OCI-LY7 (cell line): ENCODE measurements at regions of chr12 and their contacts with region 1.

Region 1: GRCh38 chr12:52087961-52088820 is 8.7 kb downstream of the SMIM41 start:
- DNase-seq: peak; percentile 94
- H3K4me3 ChIP-seq: peak overlapping the region; percentile 31
- H3K27ac ChIP-seq: peak overlapping the region; percentile 71
- H3K4me1 ChIP-seq: peaks cover 64% of the 10 kb centered on the region
- CTCF ChIP-seq: no peak

Region 2: GRCh38 chr12:51951199-51951842 is 136.9 kb before region 1 on chr12 and contains the start of gene ACVR1B:
- CTCF ChIA-PET with region 1: no interaction called
- POLR2A ChIA-PET with region 1: no interaction called
- intact Hi-C with region 1: no loop called
- DNase-seq: peak; percentile 92
- H3K4me3 ChIP-seq: peak within 1 kb of the TSS; percentile 98
- H3K27ac ChIP-seq: no peak within 1 kb of the TSS
- H3K4me1 ChIP-seq: peaks cover 18% of the 10 kb centered on the region
- CTCF ChIP-seq: no peak
- total RNA-seq, gene ACVR1B: 3.0 and 4.1 TPM in 2 replicates

Region 3: DNA sequence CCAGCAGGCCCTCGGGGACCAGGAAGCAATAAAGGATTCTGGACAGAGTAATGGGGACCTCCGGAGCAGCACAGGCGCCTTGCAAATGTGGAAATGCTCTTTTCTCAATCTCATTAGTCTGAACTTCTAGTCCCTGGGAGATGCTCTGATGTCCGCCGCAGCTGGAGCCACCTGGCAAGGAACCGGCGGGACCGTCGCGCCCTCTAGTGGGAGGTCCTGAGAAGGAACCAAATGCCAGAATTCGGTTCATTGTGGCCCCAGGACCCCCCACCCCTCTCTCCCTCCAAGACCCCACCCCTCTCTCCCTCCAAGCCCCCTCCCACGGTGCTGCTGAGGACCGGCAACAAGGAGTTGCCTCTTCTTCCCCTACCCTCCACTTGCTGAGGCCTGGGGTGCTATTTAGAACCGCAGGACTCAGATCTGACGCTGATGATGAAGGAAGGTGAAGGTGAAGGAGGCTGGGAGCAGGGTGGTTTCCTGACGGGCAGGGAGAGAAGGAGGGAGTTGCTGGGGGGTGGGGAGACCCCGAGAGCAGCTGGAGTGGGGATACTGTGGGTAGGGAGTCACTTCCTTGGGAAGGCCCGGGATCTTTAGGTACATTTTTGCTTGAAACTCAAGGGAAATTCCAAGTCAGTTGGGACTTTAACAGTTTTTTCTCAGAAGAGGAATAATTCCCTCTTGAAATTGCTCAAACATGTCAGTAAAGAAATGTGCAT is 33.8 kb after region 1 on chr12:
- CTCF ChIA-PET with region 1: interaction called, 6 read pairs
- POLR2A ChIA-PET with region 1: interaction called, 13 read pairs
- intact Hi-C with region 1: loop called (anchors 1 kb)
- DNase-seq: peak; percentile 86
- H3K4me3 ChIP-seq: peak overlapping the region; percentile 27
- H3K27ac ChIP-seq: peak overlapping the region; percentile 41
- H3K4me1 ChIP-seq: peaks cover 70% of the 10 kb centered on the region
- CTCF ChIP-seq: peak; percentile 89